ENCODE measurements at regions of chr17 and their contacts with region 1.

Region 1: GRCh38 chr17:72683506-72684404 is 408.7 kb downstream of the SLC39A11 start:
- DNase-seq: peak; percentile 94
- ATAC-seq: peak; percentile 83
- H3K4me3 ChIP-seq: peak overlapping the region; percentile 2 to 30; a peak in 3 of 4 replicates
- H3K27ac ChIP-seq: peak overlapping the region; percentile 87
- H3K4me1 ChIP-seq: peaks cover 63 to 82% of the 10 kb centered on the region in 2 experiments
- H3K27me3 ChIP-seq: no peaks in the 10 kb centered on the region
- CTCF ChIP-seq: no peak
- POLR2A ChIP-seq: no peak
- RAD21 ChIP-seq: peak; percentile 43

Region 2: DNA sequence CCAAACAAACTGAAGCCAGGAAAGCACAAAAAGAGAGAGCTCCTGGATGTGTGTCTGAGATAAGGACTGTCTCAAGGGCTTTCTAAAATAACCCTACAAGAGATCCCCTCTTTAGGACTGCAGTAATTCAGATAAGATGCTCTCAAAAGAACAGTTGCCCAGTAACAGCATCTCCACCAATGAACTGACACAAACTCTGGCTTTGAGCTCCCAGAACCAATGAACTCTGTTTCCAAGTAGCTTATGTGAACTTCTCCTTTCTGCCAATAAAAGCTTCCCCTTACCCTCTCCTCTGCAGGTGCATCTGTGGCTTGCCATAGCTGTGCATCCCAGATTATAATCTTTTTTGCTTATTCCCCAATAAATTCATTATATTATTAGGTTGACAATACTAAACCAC is 12.7 kb before region 1 on chr17:
- CTCF ChIA-PET with region 1: interaction called, 4 read pairs
- POLR2A ChIA-PET with region 1: interaction called, 10 read pairs
- RAD21 ChIA-PET with region 1: interaction called in 1 of 2 experiments, 3 read pairs
- intact Hi-C with region 1: no loop called
- DNase-seq: no peak
- ATAC-seq: no peak
- H3K4me3 ChIP-seq: no peak overlapping the region
- H3K27ac ChIP-seq: no peak overlapping the region
- H3K4me1 ChIP-seq: peaks cover 0 to 13% of the 10 kb centered on the region in 2 experiments; a peak in 1 of 4 replicates
- H3K27me3 ChIP-seq: no peaks in the 10 kb centered on the region
- CTCF ChIP-seq: no peak
- POLR2A ChIP-seq: no peak
- RAD21 ChIP-seq: no peak

Region 3: GRCh38 chr17:72715906-72716572 is 32.3 kb after region 1 on chr17:
- CTCF ChIA-PET with region 1: interaction called, 3 read pairs
- POLR2A ChIA-PET with region 1: interaction called, 8 read pairs
- RAD21 ChIA-PET with region 1: interaction called, 5 to 10 read pairs
- intact Hi-C with region 1: loop called (anchors 2 kb)
- DNase-seq: peak; percentile 100
- ATAC-seq: peak; percentile 87
- H3K4me3 ChIP-seq: peak overlapping the region in 1 of 2 experiments; percentile 33; a peak in 2 of 4 replicates
- H3K27ac ChIP-seq: peak overlapping the region; percentile 82
- H3K4me1 ChIP-seq: peaks cover 46 to 64% of the 10 kb centered on the region in 2 experiments
- H3K27me3 ChIP-seq: no peaks in the 10 kb centered on the region
- CTCF ChIP-seq: no peak
- POLR2A ChIP-seq: no peak
- RAD21 ChIP-seq: peak; percentile 62